ENCODE measurements at regions of chr10 and their contacts with region 1.

Region 1: DNA sequence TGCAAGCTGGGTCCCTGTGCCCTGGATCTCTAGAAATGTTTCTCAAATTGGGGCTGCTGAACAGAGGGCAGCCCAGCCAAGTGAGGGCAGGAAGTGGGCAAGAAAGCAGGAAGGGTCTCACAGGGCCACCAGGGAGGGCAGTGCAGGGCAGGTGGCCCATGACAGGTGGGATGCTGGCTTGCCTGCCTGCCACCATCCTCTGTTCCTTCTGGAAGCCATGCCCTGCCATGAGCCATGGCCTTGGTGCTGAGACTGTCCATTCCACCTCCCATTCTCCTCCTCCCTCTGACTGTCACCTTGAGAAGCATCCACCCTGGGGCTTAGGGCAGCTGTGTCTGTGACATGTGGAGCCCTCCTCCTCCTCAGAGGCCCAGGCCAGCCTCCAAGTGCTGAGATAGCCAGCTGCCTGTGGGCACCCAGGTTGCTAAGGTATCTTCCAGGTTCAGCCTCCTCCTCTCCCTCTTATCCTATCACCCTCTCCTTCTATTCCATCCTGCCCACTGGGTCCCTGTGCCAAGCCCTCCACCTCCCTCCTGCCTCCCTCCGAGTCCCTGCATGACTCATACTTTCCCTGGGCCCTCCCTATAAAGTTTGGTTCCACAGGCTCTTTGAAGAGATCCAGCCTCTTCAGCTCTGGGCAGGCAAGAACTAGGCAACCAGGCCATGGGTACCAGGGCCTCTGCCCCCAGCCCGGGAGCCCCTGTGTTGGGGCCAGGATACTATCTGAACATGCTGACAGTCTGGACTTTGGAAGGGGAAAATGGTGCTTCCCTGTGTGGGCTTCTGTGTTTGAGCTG is 1.3 kb downstream of the VSIR start:
- DNase-seq: peak in 2 of 9 donors; percentile 61 to 62
- ATAC-seq: no peak
- H3K4me3 ChIP-seq: peak overlapping the region; percentile 91
- H3K4me3 Mint-ChIP-seq: peak overlapping the region; percentile 86 to 98 (median 95)
- H3K27ac ChIP-seq: peak overlapping the region; percentile 93
- H3K27ac Mint-ChIP-seq: peak overlapping the region; percentile 80 to 98 (median 93)
- H3K4me1 ChIP-seq: peaks cover 70 to 71% of the 10 kb centered on the region in 2 donors
- H3K4me1 Mint-ChIP-seq: peaks cover 59 to 84% (median 79%) of the 10 kb centered on the region in 7 donors
- H3K27me3 ChIP-seq: no peaks in the 10 kb centered on the region
- H3K27me3 Mint-ChIP-seq: no peaks in the 10 kb centered on the region

Region 2: GRCh38 chr10:71302874-71303568 is 469.0 kb before region 1 on chr10:
- CTCF ChIA-PET with region 1: no interaction called
- POLR2A ChIA-PET with region 1: no interaction called
- intact Hi-C with region 1: no loop called
- DNase-seq: peak in 6 of 9 donors; percentile 21 to 43 (median 38)
- ATAC-seq: peak; percentile 69
- H3K4me3 ChIP-seq: no peak overlapping the region
- H3K4me3 Mint-ChIP-seq: no peak overlapping the region
- H3K27ac ChIP-seq: no peak overlapping the region
- H3K27ac Mint-ChIP-seq: no peak overlapping the region
- H3K4me1 ChIP-seq: no peaks in the 10 kb centered on the region
- H3K4me1 Mint-ChIP-seq: peaks cover 2 to 11% (median 6%) of the 10 kb centered on the region in 7 donors
- H3K27me3 ChIP-seq: no peaks in the 10 kb centered on the region
- H3K27me3 Mint-ChIP-seq: peaks cover 0 to 10% (median 3%) of the 10 kb centered on the region in 5 donors

Region 3: GRCh38 chr10:71396084-71396720 is 375.8 kb before region 1 on chr10:
- CTCF ChIA-PET with region 1: no interaction called
- POLR2A ChIA-PET with region 1: no interaction called
- intact Hi-C with region 1: no loop called
- DNase-seq: peak in 6 of 9 donors; percentile 18 to 33 (median 26)
- ATAC-seq: peak; percentile 68
- H3K4me3 ChIP-seq: peak overlapping the region; percentile 24
- H3K4me3 Mint-ChIP-seq: peak overlapping the region; percentile 11 to 83 (median 68)
- H3K27ac ChIP-seq: no peak overlapping the region
- H3K27ac Mint-ChIP-seq: no peak overlapping the region
- H3K4me1 ChIP-seq: no peaks in the 10 kb centered on the region
- H3K4me1 Mint-ChIP-seq: peaks cover 0 to 11% (median 4%) of the 10 kb centered on the region in 7 donors
- H3K27me3 ChIP-seq: peaks cover 0 to 16% of the 10 kb centered on the region in 2 donors
- H3K27me3 Mint-ChIP-seq: peaks cover 59 to 76% (median 67%) of the 10 kb centered on the region in 5 donors

Region 4: GRCh38 chr10:71664585-71664984 is 107.4 kb before region 1 on chr10:
- CTCF ChIA-PET with region 1: interaction called, 3 read pairs
- POLR2A ChIA-PET with region 1: no interaction called
- intact Hi-C with region 1: loop called in 1 of 2 experiments (anchors 1 kb)
- DNase-seq: no peak
- ATAC-seq: no peak
- H3K4me3 ChIP-seq: no peak overlapping the region
- H3K4me3 Mint-ChIP-seq: no peak overlapping the region
- H3K27ac ChIP-seq: no peak overlapping the region
- H3K27ac Mint-ChIP-seq: peak overlapping the region in 1 of 9 donors; percentile 87
- H3K4me1 ChIP-seq: peaks cover 0 to 10% of the 10 kb centered on the region in 2 donors
- H3K4me1 Mint-ChIP-seq: peaks cover 14 to 35% (median 20%) of the 10 kb centered on the region in 7 donors
- H3K27me3 ChIP-seq: no peaks in the 10 kb centered on the region
- H3K27me3 Mint-ChIP-seq: no peaks in the 10 kb centered on the region

Region 5: DNA sequence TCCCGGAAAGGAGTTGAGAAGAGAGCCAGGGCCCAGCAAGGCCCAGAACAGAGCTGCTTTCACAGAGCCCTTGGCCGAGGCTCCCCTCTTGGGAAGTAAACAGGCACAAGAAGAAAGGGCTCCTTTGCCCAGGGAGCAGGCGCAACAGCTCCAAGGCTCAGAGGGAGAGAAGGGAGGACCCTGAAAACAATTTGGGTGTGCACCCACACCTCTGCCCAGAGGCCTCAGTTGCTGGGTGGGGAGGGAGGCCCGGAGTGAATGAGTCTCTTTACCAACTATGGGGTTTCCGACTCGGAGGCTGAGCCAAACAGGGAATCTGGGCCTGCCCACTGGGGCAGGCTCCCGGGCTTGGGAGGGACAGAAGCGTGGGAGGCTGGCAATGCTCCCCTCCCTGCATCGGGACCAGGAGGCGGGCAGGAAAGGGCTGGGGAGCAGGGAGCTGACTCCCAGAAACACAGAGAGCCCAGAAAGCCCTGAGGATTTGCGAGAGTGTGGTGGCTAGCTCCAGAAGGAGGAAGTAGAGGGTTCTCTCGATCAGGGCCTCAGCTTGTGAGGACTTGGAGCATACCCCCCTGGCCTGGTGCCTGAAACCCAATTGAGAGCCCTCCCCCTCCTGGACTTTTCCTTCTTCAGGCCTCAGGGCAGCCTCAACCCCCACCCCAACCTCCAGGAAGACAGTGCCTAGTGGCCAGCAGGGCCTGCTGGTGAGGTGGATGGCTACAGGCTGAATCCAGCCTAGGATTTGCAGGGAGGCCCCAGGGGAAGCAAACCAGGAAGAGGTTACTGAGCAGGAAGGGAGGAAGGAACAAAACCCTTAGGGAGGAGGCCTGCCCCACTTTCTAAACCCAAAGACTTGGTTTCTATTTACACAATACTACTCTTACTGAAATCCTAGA is 58.6 kb before region 1 on chr10:
- CTCF ChIA-PET with region 1: interaction called, 38 read pairs
- POLR2A ChIA-PET with region 1: interaction called, 54 read pairs
- intact Hi-C with region 1: loop called (anchors 1 kb)
- DNase-seq: peak in 2 of 9 donors; percentile 40 to 41
- ATAC-seq: peak; percentile 47
- H3K4me3 ChIP-seq: peak overlapping the region; percentile 9
- H3K4me3 Mint-ChIP-seq: peak overlapping the region; percentile 73 to 86 (median 81)
- H3K27ac ChIP-seq: peak overlapping the region; percentile 91
- H3K27ac Mint-ChIP-seq: peak overlapping the region; percentile 97 to 100 (median 98)
- H3K4me1 ChIP-seq: peaks cover 45 to 63% of the 10 kb centered on the region in 2 donors
- H3K4me1 Mint-ChIP-seq: peaks cover 41 to 86% (median 73%) of the 10 kb centered on the region in 7 donors
- H3K27me3 ChIP-seq: no peaks in the 10 kb centered on the region
- H3K27me3 Mint-ChIP-seq: no peaks in the 10 kb centered on the region

Region 6: DNA sequence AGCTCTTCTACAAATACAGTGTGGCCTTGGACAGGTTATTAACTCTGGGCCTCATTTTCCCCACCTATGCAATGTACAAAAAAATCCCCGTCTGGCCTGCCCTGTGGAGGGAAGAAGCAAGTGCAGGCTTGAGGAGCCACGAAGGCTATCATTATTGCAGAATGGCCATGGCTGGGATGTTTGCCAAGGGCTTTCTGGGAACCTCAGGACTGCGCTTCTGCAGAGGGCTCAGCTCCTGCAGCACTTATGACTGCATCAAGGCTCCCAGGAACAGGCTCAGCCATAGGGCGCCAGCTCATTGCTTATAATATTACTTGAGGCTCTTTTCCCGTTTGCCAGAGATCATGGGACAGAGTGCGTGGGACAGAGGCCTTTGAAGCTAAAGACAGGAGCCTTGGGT is 31.9 kb before region 1 on chr10:
- CTCF ChIA-PET with region 1: interaction called, 23 read pairs
- POLR2A ChIA-PET with region 1: interaction called, 863 read pairs
- intact Hi-C with region 1: no loop called
- DNase-seq: no peak
- ATAC-seq: no peak
- H3K4me3 ChIP-seq: peak overlapping the region; percentile 55
- H3K4me3 Mint-ChIP-seq: peak overlapping the region; percentile 12 to 90 (median 72)
- H3K27ac ChIP-seq: peak overlapping the region; percentile 74
- H3K27ac Mint-ChIP-seq: peak overlapping the region; percentile 81 to 99 (median 96)
- H3K4me1 ChIP-seq: peaks cover 85 to 97% of the 10 kb centered on the region in 2 donors
- H3K4me1 Mint-ChIP-seq: peaks cover 73 to 100% (median 95%) of the 10 kb centered on the region in 7 donors
- H3K27me3 ChIP-seq: no peaks in the 10 kb centered on the region
- H3K27me3 Mint-ChIP-seq: no peaks in the 10 kb centered on the region

Region 7: GRCh38 chr10:71812016-71812912 is 40.2 kb after region 1 on chr10:
- CTCF ChIA-PET with region 1: interaction called, 17 read pairs
- POLR2A ChIA-PET with region 1: interaction called, 6 read pairs
- intact Hi-C with region 1: loop called in 1 of 2 experiments (anchors 1 kb)
- DNase-seq: peak; percentile 64 to 87 (median 80)
- ATAC-seq: peak; percentile 91
- H3K4me3 ChIP-seq: no peak overlapping the region
- H3K4me3 Mint-ChIP-seq: no peak overlapping the region
- H3K27ac ChIP-seq: no peak overlapping the region
- H3K27ac Mint-ChIP-seq: peak overlapping the region in 1 of 9 donors; percentile 48
- H3K4me1 ChIP-seq: no peaks in the 10 kb centered on the region
- H3K4me1 Mint-ChIP-seq: peaks cover 0 to 7% (median 0%) of the 10 kb centered on the region in 7 donors
- H3K27me3 ChIP-seq: no peaks in the 10 kb centered on the region
- H3K27me3 Mint-ChIP-seq: no peaks in the 10 kb centered on the region

Region 8: GRCh38 chr10:71840177-71840957 is 68.3 kb after region 1 on chr10:
- CTCF ChIA-PET with region 1: no interaction called
- POLR2A ChIA-PET with region 1: no interaction called
- intact Hi-C with region 1: no loop called
- DNase-seq: peak in 1 of 9 donors; percentile 19
- ATAC-seq: no peak
- H3K4me3 ChIP-seq: no peak overlapping the region
- H3K4me3 Mint-ChIP-seq: peak overlapping the region in 3 of 10 donors; percentile 11 to 41 (median 16)
- H3K27ac ChIP-seq: no peak overlapping the region
- H3K27ac Mint-ChIP-seq: peak overlapping the region in 2 of 9 donors; percentile 28 to 86
- H3K4me1 ChIP-seq: peaks cover 5 to 21% of the 10 kb centered on the region in 2 donors
- H3K4me1 Mint-ChIP-seq: peaks cover 51 to 89% (median 81%) of the 10 kb centered on the region in 7 donors
- H3K27me3 ChIP-seq: no peaks in the 10 kb centered on the region
- H3K27me3 Mint-ChIP-seq: no peaks in the 10 kb centered on the region

Measured in naive thymus-derived CD4-positive, alpha-beta T cell (primary cell).